Activated B cell treated with CpG ODN at 0.5 μM for 24 hours (primary cell): ENCODE measurements at regions of chr7 and their contacts with region 1.

Region 1: GRCh38 chr7:128455551-128456254 is at the start of gene HILPDA:
- DNase-seq: peak; percentile 95
- ATAC-seq: peak; percentile 87
- H3K4me3 Mint-ChIP-seq: peak within 1 kb of the TSS; percentile 95
- H3K27ac Mint-ChIP-seq: peak within 1 kb of the TSS; percentile 100
- H3K4me1 Mint-ChIP-seq: peaks cover 44% of the 10 kb centered on the region
- H3K27me3 Mint-ChIP-seq: no peaks in the 10 kb centered on the region
- CTCF ChIP-seq: no peak
- total RNA-seq, gene HILPDA: 14.5 and 17.0 TPM in 2 replicates

Region 2: GRCh38 chr7:127651556-127652332 is 804.0 kb before region 1 on chr7 and contains the start of gene SND1:
- CTCF ChIA-PET with region 1: no interaction called
- POLR2A ChIA-PET with region 1: interaction called, 3 read pairs
- intact Hi-C with region 1: loop called (anchors 5 kb)
- DNase-seq: peak; percentile 93
- ATAC-seq: peak; percentile 92
- H3K4me3 Mint-ChIP-seq: no peak within 1 kb of the TSS
- H3K27ac Mint-ChIP-seq: peak within 1 kb of the TSS; percentile 97
- H3K4me1 Mint-ChIP-seq: peaks cover 49% of the 10 kb centered on the region
- H3K27me3 Mint-ChIP-seq: no peaks in the 10 kb centered on the region
- CTCF ChIP-seq: no peak
- total RNA-seq, gene SND1: 204 and 215 TPM in 2 replicates

Region 3: DNA sequence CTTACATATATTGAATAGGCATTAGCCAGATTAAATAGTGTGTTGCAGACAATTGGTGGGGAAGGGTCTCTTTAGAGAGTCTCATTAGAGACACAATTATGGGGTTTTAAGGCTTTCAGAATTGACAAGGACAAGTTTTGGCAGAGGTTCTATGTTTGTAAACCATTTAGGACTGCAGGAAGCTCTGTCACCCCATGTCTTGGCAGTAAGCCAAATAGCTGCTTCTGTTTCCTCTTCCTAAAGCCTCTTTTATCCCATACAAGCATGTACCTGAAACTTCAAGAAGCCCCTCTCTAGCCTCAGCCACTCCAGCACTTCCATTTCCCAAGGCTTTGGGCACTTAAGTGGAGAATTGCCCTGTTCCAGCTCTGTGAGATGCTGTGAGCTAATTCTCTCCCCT is 402.7 kb before region 1 on chr7:
- CTCF ChIA-PET with region 1: no interaction called
- POLR2A ChIA-PET with region 1: no interaction called
- intact Hi-C with region 1: no loop called
- DNase-seq: no peak
- ATAC-seq: no peak
- H3K4me3 Mint-ChIP-seq: no peak overlapping the region
- H3K27ac Mint-ChIP-seq: no peak overlapping the region
- H3K4me1 Mint-ChIP-seq: peaks cover 12% of the 10 kb centered on the region
- H3K27me3 Mint-ChIP-seq: no peaks in the 10 kb centered on the region
- CTCF ChIP-seq: no peak

Region 4: DNA sequence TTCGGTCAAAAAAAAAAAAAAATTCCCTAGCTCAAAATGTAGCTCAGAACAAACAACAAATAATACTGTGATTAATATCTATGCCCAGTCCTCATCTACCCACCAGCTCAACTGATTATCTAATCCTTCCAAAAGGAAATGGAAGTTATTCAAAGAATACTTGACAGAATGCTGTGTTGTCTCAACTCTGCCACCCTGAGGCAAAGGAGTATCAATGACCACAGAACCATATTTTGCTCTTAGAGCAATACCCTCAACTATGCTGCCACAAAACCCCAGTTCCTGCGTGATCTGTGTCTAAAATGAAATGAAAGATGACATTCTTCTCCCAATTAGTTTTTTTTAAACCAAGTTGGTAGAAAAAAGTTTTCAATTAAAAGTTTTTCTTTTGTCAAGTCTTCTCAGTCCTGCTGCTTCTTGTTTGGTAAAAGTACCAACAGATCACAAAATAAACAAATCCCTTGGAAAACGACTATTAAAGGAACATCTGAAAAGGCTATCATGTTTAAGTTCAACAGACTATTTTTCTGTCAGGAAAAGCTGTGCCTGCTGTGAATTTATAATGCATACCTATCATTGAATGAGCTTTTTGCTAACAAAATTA is 133.6 kb before region 1 on chr7:
- CTCF ChIA-PET with region 1: no interaction called
- POLR2A ChIA-PET with region 1: no interaction called
- intact Hi-C with region 1: no loop called
- DNase-seq: no peak
- ATAC-seq: peak; percentile 34
- H3K4me3 Mint-ChIP-seq: no peak overlapping the region
- H3K27ac Mint-ChIP-seq: no peak overlapping the region
- H3K4me1 Mint-ChIP-seq: no peaks in the 10 kb centered on the region
- H3K27me3 Mint-ChIP-seq: no peaks in the 10 kb centered on the region
- CTCF ChIP-seq: no peak

Region 5: GRCh38 chr7:128409596-128410160 is 46.0 kb before region 1 on chr7 and contains the start of gene IMPDH1:
- CTCF ChIA-PET with region 1: interaction called, 39 read pairs
- POLR2A ChIA-PET with region 1: interaction called, 17 read pairs
- intact Hi-C with region 1: loop called (anchors 1 kb)
- DNase-seq: peak; percentile 91
- ATAC-seq: peak; percentile 76
- H3K4me3 Mint-ChIP-seq: peak within 1 kb of the TSS; percentile 91
- H3K27ac Mint-ChIP-seq: peak within 1 kb of the TSS; percentile 72
- H3K4me1 Mint-ChIP-seq: peaks cover 40% of the 10 kb centered on the region
- H3K27me3 Mint-ChIP-seq: no peaks in the 10 kb centered on the region
- CTCF ChIP-seq: no peak
- total RNA-seq, gene IMPDH1: 42.3 and 45.8 TPM in 2 replicates

Region 6: GRCh38 chr7:128425850-128426249 is 29.9 kb before region 1 on chr7:
- CTCF ChIA-PET with region 1: interaction called, 442 read pairs
- POLR2A ChIA-PET with region 1: interaction called, 21 read pairs
- intact Hi-C with region 1: loop called (anchors 1 kb)
- DNase-seq: peak; percentile 29
- ATAC-seq: peak; percentile 75
- H3K4me3 Mint-ChIP-seq: no peak overlapping the region
- H3K27ac Mint-ChIP-seq: no peak overlapping the region
- H3K4me1 Mint-ChIP-seq: no peaks in the 10 kb centered on the region
- H3K27me3 Mint-ChIP-seq: peaks cover 5% of the 10 kb centered on the region
- CTCF ChIP-seq: no peak

Region 7: DNA sequence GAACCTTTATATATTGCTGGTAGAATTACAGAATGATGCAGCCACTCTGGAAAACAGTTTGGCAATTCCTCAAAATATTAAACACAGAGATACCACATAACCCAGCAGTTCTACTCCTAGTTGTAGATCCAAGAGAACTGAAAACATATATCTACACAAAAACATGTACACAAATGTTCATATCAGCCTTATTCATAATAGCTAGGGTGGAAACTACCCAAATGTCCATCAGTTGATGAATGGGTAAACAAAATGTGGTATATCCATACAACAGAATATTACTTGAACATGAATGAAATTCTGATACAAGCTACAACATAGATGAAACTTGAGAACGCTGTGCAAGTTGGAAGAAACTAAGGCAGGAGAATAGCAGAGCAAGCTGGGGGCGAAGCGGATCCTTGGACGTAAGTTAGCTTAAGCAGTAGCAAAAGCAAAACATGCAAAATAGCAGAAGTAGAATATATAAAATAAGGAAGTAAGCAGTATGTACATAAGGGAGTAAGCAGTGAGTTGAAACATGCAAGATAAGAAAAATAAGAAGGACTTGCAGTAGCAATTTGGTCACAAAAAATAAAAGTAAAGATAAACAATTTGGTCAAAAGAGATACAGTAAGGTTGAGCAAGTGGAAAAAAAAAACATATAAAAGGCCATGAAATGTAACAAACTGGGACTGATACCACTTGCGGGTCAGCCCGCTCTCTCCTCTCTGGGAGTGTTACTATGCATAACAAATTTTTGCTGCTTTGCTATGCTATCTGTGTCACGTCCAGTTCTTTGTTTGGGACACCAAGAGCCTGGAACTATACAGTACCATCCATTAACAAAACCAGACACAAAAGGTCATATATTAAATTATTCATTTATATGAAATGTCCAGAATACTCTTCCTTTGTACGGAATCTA is 18.0 kb before region 1 on chr7:
- CTCF ChIA-PET with region 1: interaction called, 442 read pairs
- POLR2A ChIA-PET with region 1: interaction called, 61 read pairs
- intact Hi-C with region 1: loop called (anchors 1 kb)
- DNase-seq: no peak
- ATAC-seq: peak; percentile 95
- H3K4me3 Mint-ChIP-seq: peak overlapping the region; percentile 55
- H3K27ac Mint-ChIP-seq: peak overlapping the region; percentile 91
- H3K4me1 Mint-ChIP-seq: peaks cover 26% of the 10 kb centered on the region
- H3K27me3 Mint-ChIP-seq: no peaks in the 10 kb centered on the region
- CTCF ChIP-seq: no peak